ENCODE measurements at regions of chr6 and their contacts with region 1.

Region 1: DNA sequence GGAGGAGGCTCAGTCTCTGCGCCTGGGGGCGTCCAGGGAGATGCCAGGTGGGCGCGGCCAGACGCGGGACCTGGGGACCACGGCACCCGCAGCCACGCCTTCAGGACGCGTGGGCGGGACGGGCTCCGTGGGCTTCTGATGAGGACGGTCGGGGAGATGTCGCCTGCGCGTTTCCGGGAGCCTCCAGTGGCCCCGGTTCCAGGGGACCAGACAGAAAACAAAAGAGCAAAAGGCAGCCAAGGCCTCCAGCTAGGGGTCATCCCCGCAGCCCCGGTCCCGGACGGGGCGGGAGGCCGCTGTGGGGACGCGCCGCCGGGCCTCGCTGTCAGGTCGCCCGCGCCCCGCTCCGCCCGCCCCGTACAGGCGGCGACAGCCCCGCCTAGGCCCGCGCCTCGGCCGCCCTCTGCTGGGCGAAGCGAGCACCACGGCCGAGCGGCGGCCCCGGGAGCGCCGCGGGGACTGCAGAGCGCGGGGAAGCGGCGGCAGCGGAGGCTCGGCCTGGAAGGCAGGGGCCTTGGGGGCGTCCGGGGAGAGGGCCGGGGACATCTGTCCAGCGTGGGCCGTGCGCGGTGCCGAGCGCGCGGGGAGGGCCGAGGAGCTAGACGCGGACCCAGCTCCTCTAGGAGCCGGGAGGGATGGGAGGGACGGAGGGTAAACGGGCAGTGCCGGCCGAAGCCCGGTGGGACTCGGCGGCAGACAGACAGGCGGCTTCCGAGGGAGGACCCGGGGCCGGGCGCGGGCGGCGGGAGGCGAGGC is 48.7 kb downstream of the TMEM242 start:
- DNase-seq: peak; percentile 67 to 94 (median 78)
- ATAC-seq: peak; percentile 83
- H3K4me3 ChIP-seq: peak overlapping the region; percentile 74
- H3K4me3 Mint-ChIP-seq: peak overlapping the region; percentile 97
- H3K27ac ChIP-seq: peak overlapping the region; percentile 70 to 79
- H3K27ac Mint-ChIP-seq: peak overlapping the region; percentile 98
- H3K4me1 ChIP-seq: peaks cover 17% of the 10 kb centered on the region
- H3K4me1 Mint-ChIP-seq: peaks cover 13% of the 10 kb centered on the region
- H3K27me3 ChIP-seq: no peaks in the 10 kb centered on the region
- H3K27me3 Mint-ChIP-seq: no peaks in the 10 kb centered on the region
- CTCF ChIP-seq: peak; percentile 56

Region 2: GRCh38 chr6:155327326-155328073 is 1947.1 kb before region 1 on chr6:
- CTCF ChIA-PET with region 1: no interaction called
- POLR2A ChIA-PET with region 1: no interaction called
- intact Hi-C with region 1: loop called (anchors 5 kb)
- DNase-seq: peak; percentile 39 to 82 (median 57)
- ATAC-seq: peak; percentile 68
- H3K4me3 ChIP-seq: no peak overlapping the region
- H3K4me3 Mint-ChIP-seq: no peak overlapping the region
- H3K27ac ChIP-seq: no peak overlapping the region
- H3K27ac Mint-ChIP-seq: no peak overlapping the region
- H3K4me1 ChIP-seq: no peaks in the 10 kb centered on the region
- H3K4me1 Mint-ChIP-seq: peaks cover 13% of the 10 kb centered on the region
- H3K27me3 ChIP-seq: no peaks in the 10 kb centered on the region
- H3K27me3 Mint-ChIP-seq: no peaks in the 10 kb centered on the region
- CTCF ChIP-seq: peak; percentile 93

Region 3: DNA sequence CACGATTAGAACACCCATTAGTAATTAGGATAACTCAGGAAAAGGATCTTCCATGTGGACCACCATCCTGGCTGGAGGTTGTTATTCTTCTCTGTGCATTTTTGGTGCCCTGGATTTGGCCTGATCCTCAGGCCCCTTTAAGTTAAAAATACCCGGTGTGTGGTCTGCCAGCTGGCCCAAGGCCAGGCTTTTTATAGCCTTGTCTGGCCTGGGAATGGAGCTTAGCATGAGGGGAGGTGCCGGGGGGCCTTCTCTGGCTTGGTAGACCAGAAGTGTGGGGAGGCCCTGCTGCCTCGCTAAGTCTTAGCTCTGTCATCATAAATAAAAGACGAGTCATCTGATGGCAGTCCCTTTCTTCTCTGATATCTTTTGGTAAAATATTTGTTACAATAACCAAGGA is 426.1 kb before region 1 on chr6:
- CTCF ChIA-PET with region 1: no interaction called
- POLR2A ChIA-PET with region 1: no interaction called
- intact Hi-C with region 1: no loop called
- DNase-seq: no peak
- ATAC-seq: no peak
- H3K4me3 ChIP-seq: no peak overlapping the region
- H3K4me3 Mint-ChIP-seq: no peak overlapping the region
- H3K27ac ChIP-seq: no peak overlapping the region
- H3K27ac Mint-ChIP-seq: peak overlapping the region; percentile 8
- H3K4me1 ChIP-seq: peaks cover 29% of the 10 kb centered on the region
- H3K4me1 Mint-ChIP-seq: peaks cover 98% of the 10 kb centered on the region
- H3K27me3 ChIP-seq: no peaks in the 10 kb centered on the region
- H3K27me3 Mint-ChIP-seq: no peaks in the 10 kb centered on the region
- CTCF ChIP-seq: no peak

Region 4: GRCh38 chr6:157034436-157035230 is 240.0 kb before region 1 on chr6:
- CTCF ChIA-PET with region 1: interaction called, 4 read pairs
- POLR2A ChIA-PET with region 1: interaction called, 7 read pairs
- intact Hi-C with region 1: loop called in 1 of 2 experiments (anchors 1 kb)
- DNase-seq: peak in 3 of 14 experiments; percentile 63 to 72 (median 71)
- ATAC-seq: peak; percentile 86
- H3K4me3 ChIP-seq: no peak overlapping the region
- H3K4me3 Mint-ChIP-seq: peak overlapping the region; percentile 73
- H3K27ac ChIP-seq: no peak overlapping the region
- H3K27ac Mint-ChIP-seq: peak overlapping the region; percentile 86
- H3K4me1 ChIP-seq: peaks cover 2% of the 10 kb centered on the region
- H3K4me1 Mint-ChIP-seq: peaks cover 36% of the 10 kb centered on the region
- H3K27me3 ChIP-seq: no peaks in the 10 kb centered on the region
- H3K27me3 Mint-ChIP-seq: no peaks in the 10 kb centered on the region
- CTCF ChIP-seq: peak; percentile 71

Region 5: GRCh38 chr6:157229713-157230112 is 44.9 kb before region 1 on chr6:
- CTCF ChIA-PET with region 1: interaction called, 3 read pairs
- POLR2A ChIA-PET with region 1: interaction called, 6 read pairs
- intact Hi-C with region 1: loop called (anchors 2 kb)
- DNase-seq: no peak
- ATAC-seq: no peak
- H3K4me3 ChIP-seq: no peak overlapping the region
- H3K4me3 Mint-ChIP-seq: no peak overlapping the region
- H3K27ac ChIP-seq: no peak overlapping the region
- H3K27ac Mint-ChIP-seq: peak overlapping the region; percentile 50
- H3K4me1 ChIP-seq: peaks cover 41% of the 10 kb centered on the region
- H3K4me1 Mint-ChIP-seq: peaks cover 51% of the 10 kb centered on the region
- H3K27me3 ChIP-seq: peaks cover 3 to 12% of the 10 kb centered on the region in 2 experiments
- H3K27me3 Mint-ChIP-seq: peaks cover 23% of the 10 kb centered on the region
- CTCF ChIP-seq: no peak

Region 6: GRCh38 chr6:157244175-157244574 is 30.5 kb before region 1 on chr6:
- CTCF ChIA-PET with region 1: no interaction called
- POLR2A ChIA-PET with region 1: no interaction called
- intact Hi-C with region 1: no loop called
- DNase-seq: no peak
- ATAC-seq: no peak
- H3K4me3 ChIP-seq: no peak overlapping the region
- H3K4me3 Mint-ChIP-seq: no peak overlapping the region
- H3K27ac ChIP-seq: no peak overlapping the region
- H3K27ac Mint-ChIP-seq: no peak overlapping the region
- H3K4me1 ChIP-seq: peaks cover 13% of the 10 kb centered on the region
- H3K4me1 Mint-ChIP-seq: no peaks in the 10 kb centered on the region
- H3K27me3 ChIP-seq: peaks cover 0 to 3% of the 10 kb centered on the region in 2 experiments
- H3K27me3 Mint-ChIP-seq: no peaks in the 10 kb centered on the region
- CTCF ChIP-seq: no peak